ENCODE measurements at regions of chr9 and their contacts with region 1.

Region 1: GRCh38 chr9:105712773-105713172 is 18.4 kb downstream of the TMEM38B start:
- DNase-seq: peak in 2 of 3 donors; percentile 56 to 61
- ATAC-seq: peak; percentile 44 to 46
- H3K4me3 ChIP-seq: no peak overlapping the region
- H3K27ac ChIP-seq: no peak overlapping the region
- H3K4me1 ChIP-seq: peaks cover 3% of the 10 kb centered on the region
- H3K27me3 ChIP-seq: no peaks in the 10 kb centered on the region

Region 2: GRCh38 chr9:105608721-105609598 is 103.8 kb before region 1 on chr9:
- intact Hi-C with region 1: loop called in 1 of 4 experiments (anchors 5 kb)
- DNase-seq: no peak
- ATAC-seq: no peak
- H3K4me3 ChIP-seq: no peak overlapping the region
- H3K27ac ChIP-seq: no peak overlapping the region
- H3K4me1 ChIP-seq: no peaks in the 10 kb centered on the region
- H3K27me3 ChIP-seq: no peaks in the 10 kb centered on the region

Region 3: GRCh38 chr9:105647595-105648349 is 65.0 kb before region 1 on chr9:
- intact Hi-C with region 1: loop called in 2 of 4 experiments (anchors 10 kb)
- DNase-seq: no peak
- ATAC-seq: no peak
- H3K4me3 ChIP-seq: no peak overlapping the region
- H3K27ac ChIP-seq: no peak overlapping the region
- H3K4me1 ChIP-seq: no peaks in the 10 kb centered on the region
- H3K27me3 ChIP-seq: no peaks in the 10 kb centered on the region

Region 4: GRCh38 chr9:105656131-105656921 is 56.4 kb before region 1 on chr9:
- intact Hi-C with region 1: loop called in 1 of 4 experiments (anchors 10 kb)
- DNase-seq: peak; percentile 16 to 71 (median 70)
- ATAC-seq: peak; percentile 82 to 86
- H3K4me3 ChIP-seq: peak overlapping the region; percentile 57
- H3K27ac ChIP-seq: no peak overlapping the region
- H3K4me1 ChIP-seq: no peaks in the 10 kb centered on the region
- H3K27me3 ChIP-seq: no peaks in the 10 kb centered on the region

Region 5: GRCh38 chr9:105822814-105823213 is 110.0 kb after region 1 on chr9:
- intact Hi-C with region 1: no loop called
- DNase-seq: no peak
- ATAC-seq: no peak
- H3K4me3 ChIP-seq: no peak overlapping the region
- H3K27ac ChIP-seq: no peak overlapping the region
- H3K4me1 ChIP-seq: no peaks in the 10 kb centered on the region
- H3K27me3 ChIP-seq: no peaks in the 10 kb centered on the region

Measured in right cardiac atrium (tissue), 5 donors.